CD8-positive, alpha-beta T cell (primary cell): ENCODE measurements at regions of chr22 and their contacts with region 1.

Region 1: DNA sequence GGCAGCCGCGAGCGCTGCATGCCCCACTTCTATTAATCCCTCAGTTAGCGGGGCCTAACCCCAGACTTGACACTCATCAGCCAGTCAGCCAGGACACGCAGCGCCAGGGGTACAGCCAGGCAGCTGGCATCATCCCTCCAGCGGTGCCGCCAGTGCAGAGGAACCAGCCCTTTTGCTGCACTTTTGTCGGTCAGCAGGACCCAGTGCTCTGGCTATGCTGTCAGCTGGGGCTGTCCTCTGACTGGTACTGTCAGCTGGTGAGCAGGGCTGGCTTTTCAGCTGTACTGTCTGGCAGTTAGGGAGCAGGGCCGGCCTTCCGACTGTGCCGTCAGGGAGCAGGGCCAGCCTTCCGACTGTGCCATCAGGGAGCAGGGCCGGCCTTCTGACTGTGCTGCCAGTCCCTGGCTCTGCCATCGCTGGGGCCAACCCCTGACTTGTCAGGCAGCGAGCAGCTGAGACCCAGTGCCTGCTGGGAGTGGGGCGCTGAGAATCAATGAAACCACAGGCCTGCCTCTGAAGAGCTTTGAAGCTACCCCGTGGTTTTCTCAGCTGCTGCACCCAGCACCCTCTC is 115.4 kb downstream of the KIAA1671 start:
- DNase-seq: peak; percentile 73 to 97 (median 87)
- ATAC-seq: peak; percentile 85
- H3K4me3 ChIP-seq: peak overlapping the region; percentile 1 to 40
- H3K4me3 Mint-ChIP-seq: peak overlapping the region; percentile 77
- H3K27ac ChIP-seq: peak overlapping the region; percentile 69 to 72
- H3K27ac Mint-ChIP-seq: peak overlapping the region; percentile 99
- H3K4me1 ChIP-seq: peaks cover 67% of the 10 kb centered on the region
- H3K4me1 Mint-ChIP-seq: peaks cover 94% of the 10 kb centered on the region
- H3K27me3 ChIP-seq: no peaks in the 10 kb centered on the region
- H3K27me3 Mint-ChIP-seq: no peaks in the 10 kb centered on the region
- CTCF ChIP-seq: no peak

Region 2: GRCh38 chr22:23144932-23145873 is 1922.7 kb before region 1 on chr22 and contains the start of gene RAB36:
- CTCF ChIA-PET with region 1: no interaction called
- POLR2A ChIA-PET with region 1: no interaction called
- intact Hi-C with region 1: loop called in 1 of 2 experiments (anchors 10 kb)
- DNase-seq: peak; percentile 73 to 97 (median 89)
- ATAC-seq: peak; percentile 50
- H3K4me3 ChIP-seq: peak within 1 kb of the TSS; percentile 35 to 40
- H3K4me3 Mint-ChIP-seq: peak within 1 kb of the TSS; percentile 78
- H3K27ac ChIP-seq: peak within 1 kb of the TSS; percentile 71 to 87
- H3K27ac Mint-ChIP-seq: peak within 1 kb of the TSS; percentile 86
- H3K4me1 ChIP-seq: peaks cover 55% of the 10 kb centered on the region
- H3K4me1 Mint-ChIP-seq: peaks cover 46% of the 10 kb centered on the region
- H3K27me3 ChIP-seq: no peaks in the 10 kb centered on the region
- H3K27me3 Mint-ChIP-seq: no peaks in the 10 kb centered on the region
- CTCF ChIP-seq: no peak
- total RNA-seq, gene RAB36: 0.52 to 0.64 TPM

Region 3: GRCh38 chr22:24433813-24434470 is 634.0 kb before region 1 on chr22:
- CTCF ChIA-PET with region 1: no interaction called
- POLR2A ChIA-PET with region 1: no interaction called
- intact Hi-C with region 1: loop called in 1 of 2 experiments (anchors 5 kb)
- DNase-seq: no peak
- ATAC-seq: peak; percentile 53
- H3K4me3 ChIP-seq: peak overlapping the region in 1 of 2 experiments; percentile 6
- H3K4me3 Mint-ChIP-seq: peak overlapping the region; percentile 73
- H3K27ac ChIP-seq: peak overlapping the region; percentile 55 to 92
- H3K27ac Mint-ChIP-seq: peak overlapping the region; percentile 94
- H3K4me1 ChIP-seq: peaks cover 99% of the 10 kb centered on the region
- H3K4me1 Mint-ChIP-seq: peaks cover 90% of the 10 kb centered on the region
- H3K27me3 ChIP-seq: no peaks in the 10 kb centered on the region
- H3K27me3 Mint-ChIP-seq: no peaks in the 10 kb centered on the region
- CTCF ChIP-seq: no peak

Region 4: GRCh38 chr22:24951942-24952836 is 115.7 kb before region 1 on chr22 and contains the start of gene KIAA1671:
- CTCF ChIA-PET with region 1: no interaction called
- POLR2A ChIA-PET with region 1: no interaction called
- intact Hi-C with region 1: no loop called
- DNase-seq: peak; percentile 65 to 91 (median 84)
- ATAC-seq: peak; percentile 93
- H3K4me3 ChIP-seq: peak within 1 kb of the TSS; percentile 70 to 71
- H3K4me3 Mint-ChIP-seq: peak within 1 kb of the TSS; percentile 83
- H3K27ac ChIP-seq: no peak within 1 kb of the TSS
- H3K27ac Mint-ChIP-seq: no peak within 1 kb of the TSS
- H3K4me1 ChIP-seq: peaks cover 13% of the 10 kb centered on the region
- H3K4me1 Mint-ChIP-seq: peaks cover 21% of the 10 kb centered on the region
- H3K27me3 ChIP-seq: peaks cover 9% of the 10 kb centered on the region in 2 experiments
- H3K27me3 Mint-ChIP-seq: peaks cover 54% of the 10 kb centered on the region
- CTCF ChIP-seq: peak; percentile 86
- total RNA-seq, gene KIAA1671: 2.3 to 2.4 TPM

Region 5: DNA sequence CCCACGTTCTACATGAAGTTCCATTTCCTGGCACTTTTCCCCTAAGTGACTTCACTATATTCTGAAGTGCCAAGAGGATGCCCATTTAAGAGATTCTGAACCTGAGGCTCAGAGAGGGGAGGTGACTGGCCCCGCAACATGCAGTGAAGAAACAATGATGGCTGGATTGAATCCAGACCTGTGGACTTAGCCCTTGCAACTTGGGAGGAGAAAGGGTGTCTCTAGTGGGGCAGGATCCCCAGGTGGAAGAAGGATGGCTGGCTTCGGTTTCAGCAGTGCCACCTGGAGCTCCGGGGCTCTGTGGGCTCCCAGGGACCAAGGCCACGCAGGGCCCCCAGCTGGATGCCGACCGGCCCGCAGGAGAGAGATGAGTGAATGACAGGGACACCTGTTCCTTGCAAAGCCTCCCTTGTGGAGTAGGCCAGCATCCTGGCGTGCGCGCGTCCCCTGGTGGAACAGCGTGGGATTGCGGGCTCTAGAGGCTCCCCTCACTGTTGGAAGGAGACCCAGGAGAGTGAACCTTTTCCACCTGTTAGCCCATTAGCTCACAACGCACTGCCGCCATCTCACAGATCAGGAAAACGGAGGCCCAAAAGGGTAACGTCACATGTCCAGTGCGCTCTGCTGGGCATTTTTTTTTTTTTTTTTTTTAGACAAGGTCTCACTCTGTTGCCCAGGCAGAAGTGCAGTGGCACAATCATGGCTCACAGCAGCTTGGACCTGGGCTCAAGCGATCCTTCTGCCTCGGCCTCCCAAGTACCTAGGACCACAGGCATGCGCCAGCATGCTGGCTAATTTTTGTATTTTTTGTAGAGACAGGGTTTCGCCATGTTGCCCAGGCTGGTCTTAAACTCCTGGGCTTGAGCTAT is 10.7 kb before region 1 on chr22:
- CTCF ChIA-PET with region 1: interaction called, 21 read pairs
- POLR2A ChIA-PET with region 1: interaction called, 5 read pairs
- intact Hi-C with region 1: loop called (anchors 1 kb)
- DNase-seq: peak; percentile 50 to 85 (median 77)
- ATAC-seq: peak; percentile 57
- H3K4me3 ChIP-seq: no peak overlapping the region
- H3K4me3 Mint-ChIP-seq: no peak overlapping the region
- H3K27ac ChIP-seq: no peak overlapping the region
- H3K27ac Mint-ChIP-seq: no peak overlapping the region
- H3K4me1 ChIP-seq: peaks cover 29% of the 10 kb centered on the region
- H3K4me1 Mint-ChIP-seq: peaks cover 36% of the 10 kb centered on the region
- H3K27me3 ChIP-seq: peaks cover 0 to 2% of the 10 kb centered on the region in 2 experiments
- H3K27me3 Mint-ChIP-seq: no peaks in the 10 kb centered on the region
- CTCF ChIP-seq: peak; percentile 76

Region 6: DNA sequence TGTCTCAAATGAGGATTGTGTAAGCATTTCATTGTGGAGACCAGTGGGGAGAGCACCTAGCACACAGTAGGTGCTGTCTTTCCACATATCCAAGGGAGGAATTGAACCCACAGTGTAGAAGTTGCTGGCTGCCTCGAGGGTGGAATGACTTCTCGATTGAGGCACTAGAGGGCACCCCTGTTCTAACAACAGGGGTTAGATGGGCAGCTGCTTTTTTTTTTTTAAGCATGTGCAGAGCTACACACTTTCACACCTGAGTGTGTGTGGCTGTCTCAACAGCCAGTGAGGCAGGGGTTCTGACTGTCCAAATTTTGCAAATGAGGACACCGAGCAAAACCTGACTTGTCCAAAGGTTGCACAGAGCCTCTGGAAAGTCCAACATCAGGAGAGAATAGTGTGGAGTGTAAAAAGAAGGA is 13.5 kb after region 1 on chr22:
- CTCF ChIA-PET with region 1: interaction called, 151 read pairs
- POLR2A ChIA-PET with region 1: interaction called, 36 read pairs
- intact Hi-C with region 1: loop called in 1 of 2 experiments (anchors 1 kb)
- DNase-seq: peak in 8 of 9 experiments; percentile 17 to 75 (median 56)
- ATAC-seq: peak; percentile 75
- H3K4me3 ChIP-seq: no peak overlapping the region
- H3K4me3 Mint-ChIP-seq: no peak overlapping the region
- H3K27ac ChIP-seq: no peak overlapping the region
- H3K27ac Mint-ChIP-seq: no peak overlapping the region
- H3K4me1 ChIP-seq: peaks cover 32% of the 10 kb centered on the region
- H3K4me1 Mint-ChIP-seq: peaks cover 58% of the 10 kb centered on the region
- H3K27me3 ChIP-seq: no peaks in the 10 kb centered on the region
- H3K27me3 Mint-ChIP-seq: no peaks in the 10 kb centered on the region
- CTCF ChIP-seq: peak; percentile 67

Region 7: GRCh38 chr22:25404928-25405816 is 337.2 kb after region 1 on chr22:
- CTCF ChIA-PET with region 1: no interaction called
- POLR2A ChIA-PET with region 1: no interaction called
- intact Hi-C with region 1: loop called in 1 of 2 experiments (anchors 10 kb)
- DNase-seq: peak; percentile 28 to 81 (median 64)
- ATAC-seq: peak; percentile 91
- H3K4me3 ChIP-seq: peak overlapping the region; percentile 50 to 55
- H3K4me3 Mint-ChIP-seq: peak overlapping the region; percentile 93
- H3K27ac ChIP-seq: peak overlapping the region; percentile 50 to 78
- H3K27ac Mint-ChIP-seq: peak overlapping the region; percentile 69
- H3K4me1 ChIP-seq: peaks cover 30% of the 10 kb centered on the region
- H3K4me1 Mint-ChIP-seq: peaks cover 33% of the 10 kb centered on the region
- H3K27me3 ChIP-seq: no peaks in the 10 kb centered on the region
- H3K27me3 Mint-ChIP-seq: no peaks in the 10 kb centered on the region
- CTCF ChIP-seq: no peak